ENCODE measurements at regions of chr17 and their contacts with region 1.

Region 1: DNA sequence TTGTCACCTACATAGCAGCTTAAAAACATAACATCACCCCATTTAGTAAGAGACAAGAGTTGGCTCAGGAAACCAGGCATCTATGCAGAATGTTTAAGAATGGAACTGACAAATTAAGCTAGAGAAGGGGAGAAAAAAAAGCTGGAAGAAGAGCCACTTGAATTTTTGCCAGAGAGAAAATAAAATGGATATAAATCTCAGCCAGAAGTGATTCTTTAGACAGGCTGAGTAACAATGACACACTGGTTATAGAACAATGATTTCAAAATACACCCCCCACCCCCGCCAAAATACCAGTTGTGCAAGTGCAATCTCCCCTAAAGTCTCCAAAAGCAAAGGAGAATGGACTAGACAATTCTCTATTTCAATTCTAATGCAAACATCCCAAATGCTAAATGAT is 22.4 kb downstream of the LSM12 start:
- DNase-seq: peak; percentile 65
- ATAC-seq: no peak; the same call in 1 of the 2 replicates
- H3K4me3 ChIP-seq: no peak overlapping the region
- H3K27ac ChIP-seq: peak overlapping the region; percentile 57; the same call in 1 of the 2 replicates
- H3K4me1 ChIP-seq: peaks cover 12% of the 10 kb centered on the region
- H3K27me3 ChIP-seq: no peaks in the 10 kb centered on the region
- CTCF ChIP-seq: no peak
- POLR2A ChIP-seq: no peak
- RAD21 ChIP-seq: no peak

Region 2: DNA sequence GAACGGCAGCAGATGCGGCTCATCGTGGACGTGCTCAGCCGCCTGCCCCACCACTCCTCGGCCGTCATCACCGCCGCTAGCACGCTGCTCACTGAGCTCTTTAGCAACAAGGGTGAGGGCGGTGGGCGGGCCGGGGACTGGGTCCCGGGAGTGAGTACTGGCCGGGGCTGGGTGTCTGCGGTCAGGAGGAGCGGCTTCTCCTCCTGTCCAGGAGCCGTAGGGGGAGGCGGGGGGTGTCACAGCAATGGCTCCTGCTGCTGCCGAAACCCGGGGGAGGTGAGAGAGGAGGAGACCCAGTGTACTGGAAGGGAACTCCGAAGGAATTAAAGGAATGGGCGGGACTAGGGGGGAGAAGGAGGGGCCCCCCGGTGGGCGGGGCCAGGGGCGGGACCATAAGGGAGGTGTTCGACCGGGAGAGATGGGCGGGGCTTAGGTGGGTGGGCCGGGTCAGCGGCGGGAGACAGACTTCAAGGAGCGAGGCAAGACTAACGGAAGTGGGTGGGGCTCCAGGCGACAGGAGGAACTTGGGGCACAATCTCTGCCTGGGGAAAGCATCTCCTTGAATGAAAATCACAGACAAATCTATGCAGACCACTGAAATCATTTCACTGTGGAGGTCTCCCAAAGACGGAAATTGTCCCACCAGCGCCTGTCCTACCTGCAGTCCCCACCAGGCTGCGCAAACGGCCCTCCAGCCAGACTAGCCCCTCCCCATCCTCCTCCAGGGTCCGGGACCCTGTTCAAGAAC is 37.3 kb before region 1 on chr17:
- CTCF ChIA-PET with region 1: no interaction called
- POLR2A ChIA-PET with region 1: interaction called, 3 read pairs
- dilution Hi-C with region 1: no loop called
- in situ Hi-C with region 1: no loop called
- intact Hi-C with region 1: loop called (anchors 1 kb)
- DNase-seq: peak; percentile 92
- ATAC-seq: peak; percentile 91
- H3K4me3 ChIP-seq: peak overlapping the region; percentile 59
- H3K27ac ChIP-seq: peak overlapping the region; percentile 59
- H3K4me1 ChIP-seq: peaks cover 23% of the 10 kb centered on the region
- H3K27me3 ChIP-seq: peaks cover 3% of the 10 kb centered on the region; the same call in 1 of the 2 replicates
- CTCF ChIP-seq: peak; percentile 70
- POLR2A ChIP-seq: 0 out of 2 replicates have a peak, but pooled peaks have one; percentile 50
- RAD21 ChIP-seq: peak; percentile 59

Measured in IMR-90 (cell line).